Heart left ventricle (tissue), 16 donors: ENCODE measurements at regions of chr19 and their contacts with region 1.

Region 1: DNA sequence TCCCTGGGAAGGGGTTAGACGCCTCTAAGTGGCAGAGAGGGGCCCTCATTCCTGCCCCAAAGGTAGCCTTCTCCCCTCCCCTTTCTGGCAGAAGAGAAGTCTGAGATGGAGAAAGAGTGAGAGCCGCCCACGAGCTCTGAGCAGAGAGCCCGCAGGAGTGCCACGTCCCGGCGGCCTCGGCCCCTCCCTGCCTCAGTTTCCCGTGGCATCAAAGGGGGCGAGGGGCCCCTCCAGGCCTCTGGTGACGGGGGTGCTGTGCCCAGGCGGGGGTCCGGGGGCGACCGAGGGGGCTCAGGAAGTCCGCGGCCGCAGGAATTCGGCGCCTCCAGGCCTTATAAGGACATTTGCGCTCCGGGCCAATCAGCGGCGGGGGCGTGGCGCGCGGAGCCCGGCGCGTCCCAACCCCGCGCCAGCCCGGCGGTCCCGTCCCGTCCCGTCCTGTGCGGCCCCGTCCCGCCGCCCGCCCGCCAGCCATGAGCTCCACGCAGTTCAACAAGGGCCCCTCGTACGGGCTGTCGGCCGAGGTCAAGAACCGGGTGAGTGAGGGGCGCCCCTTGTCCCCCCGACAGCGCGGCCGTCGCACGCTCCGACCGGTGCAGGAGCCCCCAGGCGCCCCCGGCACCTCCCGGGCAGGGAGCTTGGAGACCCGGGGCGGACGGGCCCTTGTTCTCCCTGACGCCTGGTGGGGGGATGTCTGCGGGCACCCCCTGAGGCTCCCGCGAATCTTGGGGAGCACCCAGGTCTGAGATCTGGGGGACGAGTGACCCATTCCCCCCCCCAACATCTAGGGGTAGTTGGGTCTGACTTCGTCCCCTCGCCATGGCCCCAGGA is at the start of gene CNN2:
- DNase-seq: peak; percentile 83 to 91 (median 89)
- ATAC-seq: peak; percentile 51 to 87 (median 73)
- H3K4me3 ChIP-seq: peak within 1 kb of the TSS; percentile 54 to 97 (median 92)
- H3K27ac ChIP-seq: peak within 1 kb of the TSS; percentile 88 to 99 (median 96)
- H3K4me1 ChIP-seq: peaks cover 0 to 60% (median 29%) of the 10 kb centered on the region in 12 donors
- H3K27me3 ChIP-seq: peaks cover 0 to 22% (median 0%) of the 10 kb centered on the region in 9 donors
- CTCF ChIP-seq: no peak
- POLR2A ChIP-seq: peak; percentile 85 to 88
- total RNA-seq, gene CNN2: 26.2 to 98.5 (median 61.6) TPM

Region 2: GRCh38 chr19:850221-850978 is 176.0 kb before region 1 on chr19:
- intact Hi-C with region 1: no loop called
- DNase-seq: peak; percentile 88 to 96 (median 94)
- ATAC-seq: peak; percentile 86 to 92 (median 92)
- H3K4me3 ChIP-seq: peak overlapping the region in 8 of 12 donors; percentile 0 to 26 (median 14)
- H3K27ac ChIP-seq: peak overlapping the region; percentile 1 to 90 (median 79)
- H3K4me1 ChIP-seq: peaks cover 0 to 30% (median 9%) of the 10 kb centered on the region in 12 donors
- H3K27me3 ChIP-seq: peaks cover 12 to 63% (median 24%) of the 10 kb centered on the region in 9 donors
- CTCF ChIP-seq: no peak
- POLR2A ChIP-seq: no peak

Region 3: GRCh38 chr19:1094975-1095701 is 68.7 kb after region 1 on chr19 and contains the start of gene POLR2E:
- intact Hi-C with region 1: loop called in 8 of 10 experiments (anchors 5 kb)
- DNase-seq: peak; percentile 99 to 100 (median 99)
- ATAC-seq: peak; percentile 96 to 99 (median 98)
- H3K4me3 ChIP-seq: peak within 1 kb of the TSS; percentile 67 to 97 (median 88)
- H3K27ac ChIP-seq: peak within 1 kb of the TSS in 11 of 12 donors; percentile 65 to 88 (median 77)
- H3K4me1 ChIP-seq: peaks cover 5 to 49% (median 26%) of the 10 kb centered on the region in 12 donors
- H3K27me3 ChIP-seq: no peaks in the 10 kb centered on the region
- CTCF ChIP-seq: no peak
- POLR2A ChIP-seq: peak; percentile 35 to 88
- total RNA-seq, gene POLR2E: 116 to 220 (median 139) TPM

Region 4: DNA sequence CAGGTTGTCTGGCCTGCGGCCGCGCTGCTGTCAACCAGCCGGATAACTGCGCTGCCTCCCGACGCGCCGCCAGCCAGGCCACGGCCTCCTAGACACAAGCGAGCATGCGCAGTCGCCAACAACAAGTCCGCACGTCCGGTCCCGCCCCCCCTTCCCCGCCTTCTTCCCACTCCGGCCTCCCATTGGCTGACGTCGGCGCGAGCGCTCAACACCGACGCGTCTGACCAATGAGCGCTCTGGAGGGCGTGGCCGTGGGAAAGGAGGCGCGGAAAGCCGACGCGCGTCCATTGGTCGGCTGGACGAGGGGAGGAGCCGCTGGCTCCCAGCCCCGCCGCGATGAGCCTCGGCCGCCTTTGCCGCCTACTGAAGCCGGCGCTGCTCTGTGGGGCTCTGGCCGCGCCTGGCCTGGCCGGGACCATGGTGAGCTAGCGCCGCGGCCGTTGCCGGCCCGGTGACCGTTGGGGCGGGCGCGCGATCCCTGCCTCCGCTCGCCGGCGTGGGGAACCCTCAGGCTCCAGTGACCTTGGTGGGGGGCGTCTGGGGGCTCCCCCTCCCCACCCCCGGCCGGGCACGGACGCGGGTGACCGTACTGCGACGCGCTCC is 77.4 kb after region 1 on chr19 and contains the start of gene GPX4:
- intact Hi-C with region 1: loop called in 7 of 10 experiments (anchors 5 kb)
- DNase-seq: peak; percentile 99 to 100 (median 100)
- ATAC-seq: peak; percentile 85 to 91 (median 90)
- H3K4me3 ChIP-seq: peak within 1 kb of the TSS; percentile 35 to 95 (median 76)
- H3K27ac ChIP-seq: peak within 1 kb of the TSS; percentile 79 to 100 (median 98)
- H3K4me1 ChIP-seq: peaks cover 0 to 74% (median 56%) of the 10 kb centered on the region in 12 donors
- H3K27me3 ChIP-seq: no peaks in the 10 kb centered on the region
- CTCF ChIP-seq: no peak
- POLR2A ChIP-seq: peak; percentile 40 to 96
- total RNA-seq, gene GPX4: 251 to 590 (median 289) TPM